Calu3 (cell line): ENCODE measurements at regions of chr7 and their contacts with region 1.

Region 1: GRCh38 chr7:116173051-116174028 is 37.0 kb upstream of the TES start:
- DNase-seq: peak; percentile 38
- H3K4me3 Mint-ChIP-seq: no peak overlapping the region
- H3K27ac Mint-ChIP-seq: no peak overlapping the region
- H3K4me1 Mint-ChIP-seq: peaks cover 23% of the 10 kb centered on the region
- H3K27me3 Mint-ChIP-seq: peaks cover 17% of the 10 kb centered on the region
- CTCF ChIP-seq: peak; percentile 25

Region 2: GRCh38 chr7:116138202-116138801 is 35.0 kb before region 1 on chr7:
- CTCF ChIA-PET with region 1: interaction called, 3 read pairs
- intact Hi-C with region 1: loop called (anchors 2 kb)
- DNase-seq: peak; percentile 32
- H3K4me3 Mint-ChIP-seq: no peak overlapping the region
- H3K27ac Mint-ChIP-seq: no peak overlapping the region
- H3K4me1 Mint-ChIP-seq: no peaks in the 10 kb centered on the region
- H3K27me3 Mint-ChIP-seq: no peaks in the 10 kb centered on the region
- CTCF ChIP-seq: peak; percentile 55

Region 3: DNA sequence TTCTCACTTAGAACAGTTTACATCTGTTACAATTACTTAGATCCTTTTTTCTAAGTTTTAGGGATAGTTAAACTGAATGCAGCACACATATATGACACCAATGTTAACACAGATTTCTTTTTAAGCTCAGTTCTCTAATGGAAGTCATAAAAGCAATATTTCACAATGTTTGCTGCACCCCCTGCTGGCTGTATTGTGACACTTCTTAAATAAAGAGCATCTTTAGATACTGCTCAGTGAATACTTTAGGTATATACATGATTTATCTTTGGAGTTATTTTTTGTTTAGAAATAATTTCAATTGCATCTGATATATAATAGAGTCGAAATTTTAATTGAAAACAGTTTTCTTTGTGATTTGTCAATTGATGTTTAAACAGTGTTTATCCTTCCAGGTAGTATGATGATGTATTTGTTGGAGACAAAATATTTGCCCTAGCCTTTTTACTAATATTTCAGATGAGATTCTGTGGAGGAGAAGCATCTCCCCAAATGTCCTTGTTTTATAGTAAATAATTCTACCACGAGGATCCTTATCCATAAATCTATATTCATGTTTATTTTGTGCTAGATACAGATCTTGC is 954.3 kb after region 1 on chr7:
- CTCF ChIA-PET with region 1: no interaction called
- intact Hi-C with region 1: loop called (anchors 2 kb)
- DNase-seq: peak; percentile 47
- H3K4me3 Mint-ChIP-seq: no peak overlapping the region
- H3K27ac Mint-ChIP-seq: no peak overlapping the region
- H3K4me1 Mint-ChIP-seq: no peaks in the 10 kb centered on the region
- H3K27me3 Mint-ChIP-seq: no peaks in the 10 kb centered on the region
- CTCF ChIP-seq: peak; percentile 49